ENCODE measurements at regions of chr7 and their contacts with region 1.

Region 1: GRCh38 chr7:100556541-100556940 is 17.2 kb downstream of the SAP25 start:
- DNase-seq: no peak
- ATAC-seq: no peak
- H3K4me3 ChIP-seq: no peak overlapping the region
- H3K4me3 Mint-ChIP-seq: no peak overlapping the region
- H3K27ac ChIP-seq: no peak overlapping the region
- H3K27ac Mint-ChIP-seq: no peak overlapping the region
- H3K4me1 ChIP-seq: peaks cover 3 to 5% of the 10 kb centered on the region in 2 donors
- H3K4me1 Mint-ChIP-seq: peaks cover 5% of the 10 kb centered on the region
- H3K27me3 ChIP-seq: no peaks in the 10 kb centered on the region
- H3K27me3 Mint-ChIP-seq: no peaks in the 10 kb centered on the region
- CTCF ChIP-seq: no peak

Region 2: GRCh38 chr7:100469227-100470044 is 87.1 kb before region 1 on chr7:
- CTCF ChIA-PET with region 1: interaction called, 49 read pairs
- POLR2A ChIA-PET with region 1: no interaction called
- intact Hi-C with region 1: loop called (anchors 1 kb)
- DNase-seq: peak; percentile 84
- ATAC-seq: peak; percentile 90
- H3K4me3 ChIP-seq: no peak overlapping the region
- H3K4me3 Mint-ChIP-seq: no peak overlapping the region
- H3K27ac ChIP-seq: no peak overlapping the region
- H3K27ac Mint-ChIP-seq: peak overlapping the region; percentile 53
- H3K4me1 ChIP-seq: peaks cover 9 to 21% of the 10 kb centered on the region in 2 donors
- H3K4me1 Mint-ChIP-seq: peaks cover 24% of the 10 kb centered on the region
- H3K27me3 ChIP-seq: no peaks in the 10 kb centered on the region
- H3K27me3 Mint-ChIP-seq: no peaks in the 10 kb centered on the region
- CTCF ChIP-seq: peak; percentile 87

Region 3: GRCh38 chr7:100493476-100494264 is 62.9 kb before region 1 on chr7:
- CTCF ChIA-PET with region 1: interaction called, 21 read pairs
- POLR2A ChIA-PET with region 1: no interaction called
- intact Hi-C with region 1: no loop called
- DNase-seq: peak; percentile 58
- ATAC-seq: peak; percentile 79
- H3K4me3 ChIP-seq: peak overlapping the region in 3 of 5 experiments; percentile 11 to 50 (median 33)
- H3K4me3 Mint-ChIP-seq: peak overlapping the region; percentile 64
- H3K27ac ChIP-seq: no peak overlapping the region
- H3K27ac Mint-ChIP-seq: no peak overlapping the region
- H3K4me1 ChIP-seq: peaks cover 7 to 13% of the 10 kb centered on the region in 2 donors
- H3K4me1 Mint-ChIP-seq: peaks cover 11% of the 10 kb centered on the region
- H3K27me3 ChIP-seq: peaks cover 0 to 41% (median 9%) of the 10 kb centered on the region in 4 experiments
- H3K27me3 Mint-ChIP-seq: peaks cover 32% of the 10 kb centered on the region
- CTCF ChIP-seq: no peak

Region 4: GRCh38 chr7:100538654-100539435 is 17.7 kb before region 1 on chr7 and contains the start of gene AGFG2:
- CTCF ChIA-PET with region 1: interaction called, 21 read pairs
- POLR2A ChIA-PET with region 1: no interaction called
- intact Hi-C with region 1: loop called (anchors 2 kb)
- DNase-seq: peak; percentile 100
- ATAC-seq: peak; percentile 97
- H3K4me3 ChIP-seq: peak within 1 kb of the TSS; percentile 62 to 84 (median 72)
- H3K4me3 Mint-ChIP-seq: peak within 1 kb of the TSS; percentile 91
- H3K27ac ChIP-seq: peak within 1 kb of the TSS in 1 of 2 donors; percentile 42
- H3K27ac Mint-ChIP-seq: peak within 1 kb of the TSS; percentile 76
- H3K4me1 ChIP-seq: peaks cover 14 to 23% of the 10 kb centered on the region in 2 donors
- H3K4me1 Mint-ChIP-seq: peaks cover 36% of the 10 kb centered on the region
- H3K27me3 ChIP-seq: no peaks in the 10 kb centered on the region
- H3K27me3 Mint-ChIP-seq: no peaks in the 10 kb centered on the region
- CTCF ChIP-seq: no peak
- total RNA-seq, gene AGFG2: 11.0 and 11.6 TPM in 2 replicates

Region 5: GRCh38 chr7:100568896-100569844 is 12.6 kb after region 1 on chr7:
- CTCF ChIA-PET with region 1: interaction called, 13 read pairs
- POLR2A ChIA-PET with region 1: no interaction called
- intact Hi-C with region 1: no loop called
- DNase-seq: peak; percentile 61
- ATAC-seq: peak; percentile 40
- H3K4me3 ChIP-seq: peak overlapping the region in 4 of 5 experiments; percentile 29 to 48 (median 38)
- H3K4me3 Mint-ChIP-seq: peak overlapping the region; percentile 67
- H3K27ac ChIP-seq: no peak overlapping the region
- H3K27ac Mint-ChIP-seq: peak overlapping the region; percentile 60
- H3K4me1 ChIP-seq: peaks cover 39 to 50% of the 10 kb centered on the region in 2 donors
- H3K4me1 Mint-ChIP-seq: peaks cover 39% of the 10 kb centered on the region
- H3K27me3 ChIP-seq: no peaks in the 10 kb centered on the region
- H3K27me3 Mint-ChIP-seq: no peaks in the 10 kb centered on the region
- CTCF ChIP-seq: peak; percentile 51

Region 6: DNA sequence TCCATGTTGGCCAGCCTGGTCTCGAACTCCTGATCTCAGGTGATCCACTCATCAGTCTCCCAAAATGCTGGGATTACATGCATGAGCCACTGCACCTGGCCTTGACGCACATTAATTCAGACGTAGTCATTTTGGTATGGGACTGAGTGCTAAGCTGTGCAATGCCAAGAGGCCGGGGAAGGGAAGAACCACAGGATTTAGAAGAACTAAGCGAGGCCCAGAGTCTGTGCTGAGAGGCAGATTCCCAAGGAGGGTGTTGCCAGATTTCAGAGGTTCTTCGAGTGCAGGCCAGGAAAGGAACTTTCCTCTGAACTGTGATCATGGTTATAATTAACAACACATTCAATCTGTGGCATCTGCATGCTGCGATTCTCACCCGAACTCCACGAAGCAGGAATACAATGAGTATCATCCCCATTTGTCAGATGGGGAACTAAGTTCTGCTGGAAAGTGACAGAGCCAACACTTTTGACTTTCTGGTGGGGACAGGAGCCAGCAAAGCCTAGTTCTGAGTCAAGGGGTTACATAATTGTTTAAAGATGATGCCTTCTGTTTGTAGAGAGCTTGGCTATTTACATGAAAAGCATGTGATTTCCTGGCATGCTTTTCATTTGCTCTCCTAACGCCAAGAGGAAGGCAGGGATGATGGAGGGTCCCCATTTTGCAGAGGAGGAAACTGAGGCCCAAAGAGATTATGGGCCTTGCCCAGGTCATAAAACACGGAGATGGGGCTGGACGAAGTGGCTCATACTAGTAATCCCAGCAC is 170.6 kb after region 1 on chr7:
- CTCF ChIA-PET with region 1: interaction called, 6 read pairs
- POLR2A ChIA-PET with region 1: interaction called, 4 read pairs
- intact Hi-C with region 1: loop called (anchors 1 kb)
- DNase-seq: no peak
- ATAC-seq: no peak
- H3K4me3 ChIP-seq: no peak overlapping the region
- H3K4me3 Mint-ChIP-seq: no peak overlapping the region
- H3K27ac ChIP-seq: no peak overlapping the region
- H3K27ac Mint-ChIP-seq: no peak overlapping the region
- H3K4me1 ChIP-seq: peaks cover 0 to 7% of the 10 kb centered on the region in 2 donors
- H3K4me1 Mint-ChIP-seq: peaks cover 3% of the 10 kb centered on the region
- H3K27me3 ChIP-seq: peaks cover 0 to 39% (median 8%) of the 10 kb centered on the region in 4 experiments
- H3K27me3 Mint-ChIP-seq: peaks cover 36% of the 10 kb centered on the region
- CTCF ChIP-seq: no peak

Measured in B cell (primary cell).